ENCODE measurements at regions of chr2 and their contacts with region 1.

Region 1: GRCh38 chr2:201100497-201100896 is 15.5 kb upstream of the CFLAR start:
- DNase-seq: no peak
- H3K4me3 Mint-ChIP-seq: no peak overlapping the region
- H3K27ac Mint-ChIP-seq: no peak overlapping the region
- H3K4me1 Mint-ChIP-seq: no peaks in the 10 kb centered on the region
- H3K27me3 Mint-ChIP-seq: no peaks in the 10 kb centered on the region
- CTCF ChIP-seq: no peak

Region 2: GRCh38 chr2:202221873-202222272 is 1121.4 kb after region 1 on chr2:
- CTCF ChIA-PET with region 1: interaction called, 10 read pairs
- intact Hi-C with region 1: no loop called
- DNase-seq: no peak
- H3K4me3 Mint-ChIP-seq: no peak overlapping the region
- H3K27ac Mint-ChIP-seq: no peak overlapping the region
- H3K4me1 Mint-ChIP-seq: peaks cover 25% of the 10 kb centered on the region
- H3K27me3 Mint-ChIP-seq: no peaks in the 10 kb centered on the region
- CTCF ChIP-seq: no peak